GM18951 (cell line): ENCODE measurements at regions of chr1 and their contacts with region 1.

Region 1: GRCh38 chr1:21963477-21964217 is 13.2 kb upstream of the CELA3B start:
- POLR2A ChIP-seq: no peak

Region 2: DNA sequence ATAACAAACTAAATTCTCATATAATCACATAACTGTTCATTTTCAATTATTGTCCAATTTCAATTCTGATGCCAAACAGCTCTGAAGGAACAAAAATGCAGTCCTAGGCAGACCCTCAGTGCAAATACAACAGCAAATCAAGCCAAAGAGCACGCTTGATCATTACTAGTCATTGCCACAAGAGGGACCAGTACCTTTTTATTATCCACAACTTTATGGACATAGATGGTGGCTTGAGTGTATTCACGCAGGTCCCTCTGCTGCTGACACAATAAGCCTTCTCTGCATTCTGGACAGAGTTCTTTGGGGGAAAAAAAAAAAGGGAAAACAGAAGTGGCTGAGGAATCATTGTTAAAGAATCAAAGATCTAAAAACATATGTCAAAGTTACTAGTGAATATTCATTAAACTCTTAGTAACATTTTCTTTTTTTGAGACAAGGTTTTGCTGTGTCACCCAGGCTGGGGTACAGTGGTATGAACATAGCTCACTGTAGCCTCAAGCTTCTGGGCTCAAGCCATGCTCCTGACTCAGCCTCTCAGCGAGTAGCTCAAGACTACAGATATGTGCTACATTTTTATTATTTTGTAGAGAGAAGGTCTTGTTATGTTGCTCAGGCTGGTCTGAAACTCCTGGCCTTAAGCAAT is 260.2 kb before region 1 on chr1:
- in situ Hi-C with region 1: loop called (anchors 25 kb)
- POLR2A ChIP-seq: no peak